ENCODE measurements at regions of chr21 and their contacts with region 1.

Region 1: GRCh38 chr21:42878993-42879787 is at the start of gene WDR4:
- DNase-seq: peak; percentile 99
- ATAC-seq: peak; percentile 88
- H3K4me3 Mint-ChIP-seq: peak within 1 kb of the TSS; percentile 91
- H3K27ac Mint-ChIP-seq: peak within 1 kb of the TSS; percentile 95
- H3K4me1 Mint-ChIP-seq: peaks cover 23% of the 10 kb centered on the region
- H3K27me3 Mint-ChIP-seq: no peaks in the 10 kb centered on the region
- CTCF ChIP-seq: no peak
- total RNA-seq, gene WDR4: 56.7 and 60.5 TPM in 2 replicates

Region 2: DNA sequence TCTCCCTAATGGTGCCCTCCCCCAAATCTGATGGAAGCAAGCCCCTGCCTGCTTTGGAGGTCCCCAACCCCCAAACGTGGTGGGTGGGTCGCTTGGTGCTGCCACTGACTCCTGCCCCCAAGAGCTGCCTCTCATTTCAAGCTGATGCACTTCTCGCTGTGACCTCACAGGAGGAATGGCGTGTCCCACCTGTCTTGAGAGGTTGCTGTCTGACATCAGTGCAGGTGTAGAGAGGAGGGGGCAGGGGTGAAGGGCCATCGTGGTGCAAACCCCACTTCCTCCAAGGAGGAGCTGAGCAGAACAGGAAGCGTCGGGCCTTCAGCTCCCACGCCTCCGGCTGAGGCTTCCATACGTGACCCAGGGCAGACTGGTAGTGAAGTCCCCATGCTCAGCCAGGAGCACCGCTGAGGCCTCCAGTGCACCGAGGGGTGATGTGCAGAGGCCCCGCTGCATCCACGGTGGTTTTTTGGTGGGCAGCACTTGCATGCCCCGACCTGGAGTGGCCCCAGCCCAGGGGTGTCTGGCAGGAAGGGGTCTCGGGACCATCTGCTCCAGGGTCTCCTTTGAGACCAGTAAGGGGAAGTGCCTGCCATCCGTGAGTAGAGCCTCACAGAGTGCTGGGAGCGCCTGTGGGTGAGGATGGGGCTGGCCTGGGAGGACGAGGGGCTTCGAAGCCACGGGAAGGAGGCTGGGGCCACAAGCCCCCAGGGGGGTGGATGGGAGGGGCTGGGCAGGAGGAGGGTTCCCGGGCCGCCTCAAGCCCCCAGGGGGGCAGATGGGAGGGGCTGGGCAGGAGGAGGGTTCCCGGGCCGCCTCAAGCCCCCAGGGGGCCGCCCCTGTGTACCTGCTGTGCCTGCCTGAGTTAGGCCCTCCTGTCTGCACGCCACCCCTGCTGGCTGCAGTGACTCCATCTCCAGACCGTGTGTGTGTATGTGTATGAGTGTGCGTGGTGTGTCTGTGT is 39.6 kb before region 1 on chr21:
- CTCF ChIA-PET with region 1: no interaction called
- POLR2A ChIA-PET with region 1: no interaction called
- intact Hi-C with region 1: loop called (anchors 2 kb)
- DNase-seq: no peak
- ATAC-seq: peak; percentile 25
- H3K4me3 Mint-ChIP-seq: no peak overlapping the region
- H3K27ac Mint-ChIP-seq: no peak overlapping the region
- H3K4me1 Mint-ChIP-seq: peaks cover 8% of the 10 kb centered on the region
- H3K27me3 Mint-ChIP-seq: no peaks in the 10 kb centered on the region
- CTCF ChIP-seq: no peak

Region 3: GRCh38 chr21:42905195-42905594 is 26.0 kb after region 1 on chr21:
- CTCF ChIA-PET with region 1: no interaction called
- POLR2A ChIA-PET with region 1: no interaction called
- intact Hi-C with region 1: no loop called
- DNase-seq: no peak
- ATAC-seq: no peak
- H3K4me3 Mint-ChIP-seq: no peak overlapping the region
- H3K27ac Mint-ChIP-seq: no peak overlapping the region
- H3K4me1 Mint-ChIP-seq: no peaks in the 10 kb centered on the region
- H3K27me3 Mint-ChIP-seq: no peaks in the 10 kb centered on the region
- CTCF ChIP-seq: no peak

Region 4: GRCh38 chr21:42923541-42924432 is 44.6 kb after region 1 on chr21:
- CTCF ChIA-PET with region 1: no interaction called
- POLR2A ChIA-PET with region 1: no interaction called
- intact Hi-C with region 1: loop called (anchors 1 kb)
- DNase-seq: peak; percentile 32
- ATAC-seq: peak; percentile 96
- H3K4me3 Mint-ChIP-seq: peak overlapping the region; percentile 42
- H3K27ac Mint-ChIP-seq: peak overlapping the region; percentile 71
- H3K4me1 Mint-ChIP-seq: peaks cover 12% of the 10 kb centered on the region
- H3K27me3 Mint-ChIP-seq: no peaks in the 10 kb centered on the region
- CTCF ChIP-seq: no peak

Region 5: DNA sequence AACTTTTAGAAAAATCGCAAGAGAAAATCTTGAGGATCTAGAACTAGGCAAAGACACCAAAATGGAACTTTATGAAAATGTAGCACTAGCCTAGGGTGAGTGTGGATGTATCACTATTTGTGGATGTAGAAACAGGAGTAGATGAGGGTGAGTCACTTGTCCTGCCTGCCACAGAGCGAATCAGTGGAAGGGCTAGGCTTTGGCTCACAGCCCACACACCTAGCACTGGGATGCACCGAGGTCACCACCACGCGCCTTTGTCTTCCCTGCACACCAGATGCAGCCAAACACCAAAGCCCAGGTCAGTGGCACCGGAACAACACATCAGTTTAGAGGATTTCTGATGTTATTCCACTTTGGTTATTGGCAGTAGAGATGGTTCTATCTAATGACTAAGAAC is 133.4 kb after region 1 on chr21:
- CTCF ChIA-PET with region 1: no interaction called
- POLR2A ChIA-PET with region 1: no interaction called
- intact Hi-C with region 1: no loop called
- DNase-seq: no peak
- ATAC-seq: no peak
- H3K4me3 Mint-ChIP-seq: no peak overlapping the region
- H3K27ac Mint-ChIP-seq: no peak overlapping the region
- H3K4me1 Mint-ChIP-seq: peaks cover 24% of the 10 kb centered on the region
- H3K27me3 Mint-ChIP-seq: no peaks in the 10 kb centered on the region
- CTCF ChIP-seq: no peak

Measured in activated B cell treated with CpG ODN at 0.5 μM for 24 hours (primary cell).